GM12878 (cell line): ENCODE measurements at regions of chr5 and their contacts with region 1.

Region 1: DNA sequence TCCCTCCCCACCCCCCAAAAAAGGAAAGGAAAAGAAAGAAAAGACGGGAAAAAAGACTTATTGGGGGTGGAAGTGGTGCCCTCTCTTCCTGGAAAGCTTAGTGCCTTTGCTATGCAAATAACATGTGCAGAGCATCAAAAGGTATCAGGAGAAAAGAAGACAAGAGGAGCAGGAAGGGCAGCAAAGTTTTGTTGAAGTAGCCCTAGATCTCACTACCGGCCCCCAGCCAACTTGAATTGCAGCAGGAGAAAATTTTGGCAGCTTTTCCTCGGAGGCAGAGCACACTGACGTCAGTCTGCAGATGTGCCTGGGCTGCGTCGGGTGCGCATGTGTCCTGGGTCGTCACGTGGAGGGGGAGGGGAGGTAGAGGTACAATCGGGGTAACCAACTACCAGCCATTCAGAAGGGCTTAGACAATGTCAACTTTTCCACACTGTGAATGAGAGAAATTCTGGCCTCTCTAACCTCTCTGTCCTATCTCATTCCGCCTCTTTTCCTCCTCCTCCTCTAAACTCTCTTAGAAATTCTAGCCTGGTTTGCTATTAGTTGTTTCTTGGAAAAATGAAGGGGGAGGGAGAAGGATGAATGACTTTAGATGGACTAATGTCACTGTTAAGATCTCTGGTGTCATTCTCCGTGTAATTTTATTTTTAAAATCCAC is at the start of gene ADAMTS6:
- DNase-seq: peak; percentile 55
- ATAC-seq: peak; percentile 86
- H3K4me3 ChIP-seq: peak within 1 kb of the TSS; percentile 79
- H3K27ac ChIP-seq: peak within 1 kb of the TSS; percentile 78
- H3K4me1 ChIP-seq: peaks cover 4% of the 10 kb centered on the region; the same call in 1 of the 2 replicates
- H3K27me3 ChIP-seq: no peaks in the 10 kb centered on the region
- CTCF ChIP-seq: no peak
- EP300 ChIP-seq: no peak
- POLR2A ChIP-seq: peak; percentile 59
- RAD21 ChIP-seq: no peak
- polyA plus RNA-seq, gene ADAMTS6: 1.1 to 1.2 TPM

Region 2: DNA sequence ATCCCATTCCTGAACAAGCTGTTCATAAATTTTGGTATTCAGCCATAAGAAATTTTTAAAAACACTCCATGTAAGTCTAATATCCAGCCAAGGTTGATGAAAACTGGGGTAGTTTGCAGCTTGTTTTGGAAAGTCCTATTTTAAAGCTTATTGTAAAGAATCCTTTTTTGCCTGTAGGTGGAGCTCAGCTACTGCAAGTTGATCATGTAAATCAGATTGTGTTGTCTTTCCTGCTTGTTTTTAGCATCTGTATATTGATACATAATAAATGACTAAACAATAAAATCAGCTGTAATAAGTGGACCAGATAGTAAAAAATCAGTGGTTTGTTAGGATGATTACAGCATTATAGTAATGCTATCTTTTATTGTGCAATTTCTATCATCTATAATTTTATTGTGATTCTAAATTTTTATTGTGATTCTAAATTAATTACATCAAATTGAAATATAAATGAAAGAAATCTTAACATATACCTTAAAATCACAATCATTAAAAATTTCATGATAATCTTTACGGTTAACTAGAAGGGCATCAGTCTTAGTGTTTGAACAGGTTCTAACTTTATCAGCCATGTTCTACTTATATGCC is 670.6 kb before region 1 on chr5:
- CTCF ChIA-PET with region 1: interaction called, 192 read pairs
- POLR2A ChIA-PET with region 1: interaction called, 4 read pairs
- RAD21 ChIA-PET with region 1: interaction called, 168 read pairs
- SMC1A ChIA-PET with region 1: interaction called, 154 read pairs
- in situ Hi-C with region 1: loop called (anchors 5 kb)
- intact Hi-C with region 1: loop called (anchors 1 kb)
- DNase-seq: peak; percentile 5
- ATAC-seq: peak; percentile 69
- H3K4me3 ChIP-seq: no peak overlapping the region
- H3K27ac ChIP-seq: no peak overlapping the region
- H3K4me1 ChIP-seq: peaks cover 12% of the 10 kb centered on the region
- H3K27me3 ChIP-seq: no peaks in the 10 kb centered on the region
- CTCF ChIP-seq: peak; percentile 54 to 72 (median 56); a peak in 5 of 6 replicates
- EP300 ChIP-seq: no peak
- POLR2A ChIP-seq: no peak
- RAD21 ChIP-seq: peak; percentile 92

Region 3: DNA sequence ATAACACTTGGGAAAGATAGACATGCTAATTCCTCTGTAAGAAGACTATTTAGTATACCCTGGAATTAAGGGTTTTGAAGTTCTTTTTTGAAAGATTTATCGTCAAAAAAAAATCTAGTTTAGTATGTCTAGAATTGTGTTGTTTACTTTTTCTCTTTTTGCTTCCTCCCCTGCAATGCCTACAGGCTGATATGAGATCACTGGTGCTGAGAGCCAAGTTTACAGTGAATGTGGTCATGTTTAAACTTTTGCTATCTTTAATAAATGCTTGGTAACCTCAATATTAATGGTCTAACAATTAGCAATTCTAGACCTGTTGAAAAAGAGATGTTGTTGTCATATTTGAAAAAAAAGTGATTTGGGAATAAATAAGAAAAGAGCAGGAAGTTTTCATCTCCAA is 626.9 kb before region 1 on chr5:
- CTCF ChIA-PET with region 1: no interaction called
- POLR2A ChIA-PET with region 1: no interaction called
- RAD21 ChIA-PET with region 1: no interaction called
- SMC1A ChIA-PET with region 1: no interaction called
- in situ Hi-C with region 1: no loop called
- intact Hi-C with region 1: no loop called
- DNase-seq: no peak
- ATAC-seq: no peak
- H3K4me3 ChIP-seq: no peak overlapping the region
- H3K27ac ChIP-seq: no peak overlapping the region
- H3K4me1 ChIP-seq: no peaks in the 10 kb centered on the region
- H3K27me3 ChIP-seq: no peaks in the 10 kb centered on the region
- CTCF ChIP-seq: no peak
- EP300 ChIP-seq: no peak
- POLR2A ChIP-seq: no peak
- RAD21 ChIP-seq: no peak

Region 4: DNA sequence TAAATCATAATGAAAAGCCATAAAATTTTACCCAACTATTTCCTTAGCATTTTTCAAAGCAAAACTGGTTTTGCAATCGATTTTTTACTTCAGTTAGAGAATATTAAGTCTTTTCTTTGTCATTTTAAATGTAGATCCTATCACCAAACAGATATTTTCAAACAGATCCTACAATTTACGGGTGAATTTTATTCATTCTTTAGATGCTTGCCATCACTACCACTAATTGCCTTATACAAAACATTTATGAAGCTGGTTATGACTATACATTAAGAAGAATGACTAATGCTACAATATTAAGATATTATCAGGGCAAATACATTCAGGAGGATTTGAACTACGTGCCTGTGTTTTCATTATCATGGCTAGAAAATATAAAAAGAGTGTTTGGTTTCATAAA is 516.2 kb before region 1 on chr5:
- CTCF ChIA-PET with region 1: interaction called, 123 read pairs
- POLR2A ChIA-PET with region 1: interaction called, 3 read pairs
- RAD21 ChIA-PET with region 1: interaction called, 104 read pairs
- SMC1A ChIA-PET with region 1: interaction called, 91 read pairs
- in situ Hi-C with region 1: loop called (anchors 5 kb)
- intact Hi-C with region 1: loop called (anchors 2 kb)
- DNase-seq: no peak
- ATAC-seq: no peak
- H3K4me3 ChIP-seq: no peak overlapping the region
- H3K27ac ChIP-seq: no peak overlapping the region
- H3K4me1 ChIP-seq: no peaks in the 10 kb centered on the region
- H3K27me3 ChIP-seq: no peaks in the 10 kb centered on the region
- CTCF ChIP-seq: no peak
- EP300 ChIP-seq: no peak
- POLR2A ChIP-seq: no peak
- RAD21 ChIP-seq: no peak

Region 5: GRCh38 chr5:65035211-65036206 is 446.3 kb before region 1 on chr5:
- CTCF ChIA-PET with region 1: interaction called, 6 read pairs
- POLR2A ChIA-PET with region 1: interaction called, 5 read pairs
- RAD21 ChIA-PET with region 1: interaction called, 11 read pairs
- SMC1A ChIA-PET with region 1: interaction called, 9 read pairs
- in situ Hi-C with region 1: no loop called
- intact Hi-C with region 1: no loop called
- DNase-seq: peak; percentile 40
- ATAC-seq: peak; percentile 89
- H3K4me3 ChIP-seq: peak overlapping the region; percentile 70
- H3K27ac ChIP-seq: peak overlapping the region; percentile 90
- H3K4me1 ChIP-seq: peaks cover 15% of the 10 kb centered on the region
- H3K27me3 ChIP-seq: no peaks in the 10 kb centered on the region
- CTCF ChIP-seq: no peak
- EP300 ChIP-seq: peak in 1 of 2 experiments; percentile 42; a peak in 1 of 4 replicates
- POLR2A ChIP-seq: peak; percentile 79
- RAD21 ChIP-seq: 0 out of 2 replicates have a peak, but pooled peaks have one; percentile 1

Region 6: GRCh38 chr5:65066385-65067146 is 415.2 kb before region 1 on chr5:
- CTCF ChIA-PET with region 1: interaction called, 61 read pairs
- POLR2A ChIA-PET with region 1: interaction called, 6 read pairs
- RAD21 ChIA-PET with region 1: interaction called, 90 read pairs
- SMC1A ChIA-PET with region 1: interaction called, 28 read pairs
- in situ Hi-C with region 1: no loop called
- intact Hi-C with region 1: loop called (anchors 5 kb)
- DNase-seq: peak; percentile 92
- ATAC-seq: peak; percentile 77
- H3K4me3 ChIP-seq: no peak overlapping the region
- H3K27ac ChIP-seq: peak overlapping the region; percentile 77
- H3K4me1 ChIP-seq: peaks cover 64% of the 10 kb centered on the region
- H3K27me3 ChIP-seq: no peaks in the 10 kb centered on the region
- CTCF ChIP-seq: no peak
- EP300 ChIP-seq: peak; percentile 78 to 92
- POLR2A ChIP-seq: no peak
- RAD21 ChIP-seq: no peak

Region 7: DNA sequence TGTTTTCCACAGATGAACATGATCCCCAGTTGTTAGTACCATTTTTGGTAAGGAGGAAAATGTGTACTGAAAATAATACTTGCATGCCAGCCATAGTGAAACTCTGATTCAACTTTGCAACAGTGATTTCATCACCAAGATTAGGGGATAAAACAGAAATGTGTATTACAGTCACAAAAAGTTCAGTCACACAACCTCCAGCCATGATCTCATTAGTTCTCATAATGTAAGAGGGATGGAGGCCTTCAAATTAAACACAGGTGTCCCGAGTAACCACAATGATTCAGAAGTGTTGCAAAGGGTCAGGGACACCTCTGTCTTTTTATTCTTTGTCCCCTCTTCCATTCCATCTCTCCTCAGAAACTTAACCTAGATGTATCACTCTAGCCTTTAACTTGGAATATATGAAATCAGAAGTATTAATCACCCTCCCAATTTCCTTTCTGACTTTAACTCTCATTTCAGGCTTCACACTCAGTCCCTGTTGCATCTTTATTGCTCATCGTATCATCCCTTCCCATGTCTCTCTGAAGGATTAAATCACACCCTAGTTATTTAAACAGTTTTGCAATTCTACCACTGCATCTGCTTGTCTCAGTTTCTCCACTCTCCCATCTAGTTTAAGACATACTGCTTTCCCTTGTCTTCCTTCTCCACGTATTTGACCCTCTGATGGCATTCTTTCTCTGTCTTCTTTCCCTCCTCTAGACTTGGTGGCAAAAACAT is 291.3 kb before region 1 on chr5:
- CTCF ChIA-PET with region 1: interaction called, 5 read pairs
- POLR2A ChIA-PET with region 1: interaction called, 3 read pairs
- RAD21 ChIA-PET with region 1: interaction called, 4 read pairs
- SMC1A ChIA-PET with region 1: interaction called, 4 read pairs
- in situ Hi-C with region 1: no loop called
- intact Hi-C with region 1: loop called (anchors 5 kb)
- DNase-seq: peak; percentile 17
- ATAC-seq: peak; percentile 92
- H3K4me3 ChIP-seq: no peak overlapping the region
- H3K27ac ChIP-seq: no peak overlapping the region
- H3K4me1 ChIP-seq: peaks cover 7% of the 10 kb centered on the region
- H3K27me3 ChIP-seq: no peaks in the 10 kb centered on the region
- CTCF ChIP-seq: no peak
- EP300 ChIP-seq: peak in 1 of 2 experiments; percentile 47; a peak in 1 of 4 replicates
- POLR2A ChIP-seq: no peak
- RAD21 ChIP-seq: no peak

Region 8: DNA sequence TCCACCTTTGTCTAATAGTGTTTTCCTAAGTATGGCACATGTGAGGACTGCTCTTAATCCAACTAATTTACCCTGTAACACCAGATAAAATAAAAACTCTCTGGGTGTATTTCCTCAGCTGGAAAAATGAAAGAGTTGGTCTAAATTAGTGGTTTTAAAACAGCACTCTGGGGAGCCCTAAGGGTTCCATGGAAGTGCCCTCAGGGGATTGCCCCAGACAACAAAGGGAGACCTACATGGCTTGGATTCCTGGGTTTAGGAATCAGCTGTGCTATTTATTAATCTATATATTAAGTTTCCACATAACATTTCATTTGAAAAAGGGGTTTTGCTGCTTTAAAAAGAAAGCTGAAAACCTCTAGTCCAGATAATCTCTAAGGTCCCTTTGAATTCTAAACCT is 20.3 kb before region 1 on chr5:
- CTCF ChIA-PET with region 1: interaction called, 6 read pairs
- POLR2A ChIA-PET with region 1: interaction called, 3 read pairs
- RAD21 ChIA-PET with region 1: interaction called, 3 read pairs
- SMC1A ChIA-PET with region 1: interaction called, 16 read pairs
- in situ Hi-C with region 1: no loop called
- intact Hi-C with region 1: no loop called
- DNase-seq: no peak
- ATAC-seq: no peak
- H3K4me3 ChIP-seq: no peak overlapping the region
- H3K27ac ChIP-seq: no peak overlapping the region
- H3K4me1 ChIP-seq: no peaks in the 10 kb centered on the region
- H3K27me3 ChIP-seq: no peaks in the 10 kb centered on the region
- CTCF ChIP-seq: no peak
- EP300 ChIP-seq: no peak
- POLR2A ChIP-seq: no peak
- RAD21 ChIP-seq: no peak